Activated CD8-positive, alpha-beta memory T cell treated with anti-CD3 and anti-CD28 coated beads, Interleukin-2, amount 10 ng/mL, durations not matched to agents 7 days and 5 days (primary cell): ENCODE measurements at regions of chrX and their contacts with region 1.

Region 1: GRCh38 chrX:152958524-152959465 is 35.1 kb downstream of the PNMA5 start:
- DNase-seq: peak; percentile 92
- ATAC-seq: peak; percentile 98
- H3K4me3 Mint-ChIP-seq: peak overlapping the region; percentile 70
- H3K27ac Mint-ChIP-seq: peak overlapping the region; percentile 84
- H3K4me1 Mint-ChIP-seq: peaks cover 10% of the 10 kb centered on the region
- H3K27me3 Mint-ChIP-seq: no peaks in the 10 kb centered on the region

Region 2: GRCh38 chrX:152941328-152942106 is 17.3 kb before region 1 on chrX:
- CTCF ChIA-PET with region 1: interaction called, 19 read pairs
- DNase-seq: peak; percentile 93
- ATAC-seq: peak; percentile 99
- H3K4me3 Mint-ChIP-seq: peak overlapping the region; percentile 85
- H3K27ac Mint-ChIP-seq: peak overlapping the region; percentile 75
- H3K4me1 Mint-ChIP-seq: peaks cover 11% of the 10 kb centered on the region
- H3K27me3 Mint-ChIP-seq: no peaks in the 10 kb centered on the region

Region 3: DNA sequence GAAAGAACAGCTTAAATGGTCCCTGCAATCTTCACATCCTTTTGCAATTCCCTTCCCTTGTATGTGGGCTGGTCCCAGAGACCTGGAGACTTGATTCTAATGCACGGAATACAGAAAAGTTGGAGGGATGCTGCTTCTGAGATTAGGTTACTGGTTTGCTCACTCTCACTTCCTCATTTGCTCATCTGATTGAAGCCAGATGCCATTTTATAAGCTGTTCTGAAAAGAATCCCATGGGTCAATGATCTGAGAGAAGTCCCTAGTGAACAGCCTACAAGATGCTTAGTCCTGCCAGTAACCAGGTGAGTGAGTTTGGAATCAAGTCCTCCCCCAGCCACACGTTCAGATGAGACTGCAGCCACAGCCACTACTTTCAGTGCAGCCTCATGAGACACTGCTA is 256.1 kb after region 1 on chrX:
- CTCF ChIA-PET with region 1: no interaction called
- DNase-seq: no peak
- ATAC-seq: no peak
- H3K4me3 Mint-ChIP-seq: no peak overlapping the region
- H3K27ac Mint-ChIP-seq: no peak overlapping the region
- H3K4me1 Mint-ChIP-seq: no peaks in the 10 kb centered on the region
- H3K27me3 Mint-ChIP-seq: peaks cover 28% of the 10 kb centered on the region